Activated CD8-positive, alpha-beta T cell treated with anti-CD3 and anti-CD28 coated beads for 36 hours (primary cell): ENCODE measurements at regions of chr3 and their contacts with region 1.

Region 1: DNA sequence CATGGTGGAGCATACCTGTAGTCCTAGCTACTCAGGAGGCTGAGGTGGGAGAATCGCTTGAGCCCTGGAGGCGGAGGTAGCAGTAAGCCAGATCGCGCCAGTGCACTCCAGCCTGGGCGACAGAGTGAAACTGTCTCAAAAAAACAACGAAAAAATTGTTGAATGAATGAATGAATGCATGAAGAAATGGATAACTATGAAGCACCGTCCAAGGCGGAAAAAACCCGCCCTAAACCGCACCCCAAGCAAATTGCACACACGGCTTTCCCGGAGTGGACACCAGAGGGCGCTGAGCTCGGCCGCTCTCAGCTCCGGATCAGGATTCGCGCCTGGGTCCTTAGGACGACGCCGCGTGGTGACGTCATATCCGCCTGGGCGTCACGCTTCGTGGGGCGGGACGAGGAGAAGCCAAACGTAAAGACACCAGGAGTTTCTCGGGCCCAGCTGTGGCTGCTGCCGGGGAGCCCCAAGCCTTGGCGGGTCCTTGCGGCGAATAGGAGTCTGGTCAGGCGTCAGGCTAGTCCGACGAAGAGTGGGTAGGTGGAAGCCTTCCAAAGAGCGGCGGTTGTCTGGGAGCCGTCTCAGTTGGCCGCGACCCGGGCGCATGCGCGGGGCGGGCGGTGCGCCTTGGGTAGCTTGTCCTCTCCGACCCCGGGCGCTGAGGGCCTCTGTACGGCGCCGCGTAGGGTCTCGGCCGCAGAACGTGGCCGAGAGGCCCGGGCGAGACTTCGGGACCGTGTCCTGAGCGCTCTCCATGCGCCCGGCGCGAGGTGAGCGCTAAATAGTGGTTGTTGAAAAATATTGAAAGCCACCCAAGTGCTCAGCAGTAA is at the starts of genes HTD2 and RPP14:
- DNase-seq: peak; percentile 99
- ATAC-seq: peak; percentile 91
- H3K4me3 Mint-ChIP-seq: peak within 1 kb of the TSS; percentile 97
- H3K27ac Mint-ChIP-seq: peak within 1 kb of the TSS; percentile 100
- H3K4me1 Mint-ChIP-seq: peaks cover 23% of the 10 kb centered on the region
- H3K27me3 Mint-ChIP-seq: peaks cover 5% of the 10 kb centered on the region
- CTCF ChIP-seq: peak; percentile 81
- total RNA-seq, gene HTD2: 8.4 to 9.6 TPM
- total RNA-seq, gene RPP14: 16.1 to 18.0 TPM

Region 2: GRCh38 chr3:58167431-58168351 is 138.4 kb before region 1 on chr3:
- CTCF ChIA-PET with region 1: interaction called, 15 read pairs
- POLR2A ChIA-PET with region 1: no interaction called
- intact Hi-C with region 1: no loop called
- DNase-seq: peak; percentile 80
- ATAC-seq: peak; percentile 99
- H3K4me3 Mint-ChIP-seq: no peak overlapping the region
- H3K27ac Mint-ChIP-seq: no peak overlapping the region
- H3K4me1 Mint-ChIP-seq: peaks cover 3% of the 10 kb centered on the region
- H3K27me3 Mint-ChIP-seq: no peaks in the 10 kb centered on the region
- CTCF ChIP-seq: peak; percentile 92

Region 3: DNA sequence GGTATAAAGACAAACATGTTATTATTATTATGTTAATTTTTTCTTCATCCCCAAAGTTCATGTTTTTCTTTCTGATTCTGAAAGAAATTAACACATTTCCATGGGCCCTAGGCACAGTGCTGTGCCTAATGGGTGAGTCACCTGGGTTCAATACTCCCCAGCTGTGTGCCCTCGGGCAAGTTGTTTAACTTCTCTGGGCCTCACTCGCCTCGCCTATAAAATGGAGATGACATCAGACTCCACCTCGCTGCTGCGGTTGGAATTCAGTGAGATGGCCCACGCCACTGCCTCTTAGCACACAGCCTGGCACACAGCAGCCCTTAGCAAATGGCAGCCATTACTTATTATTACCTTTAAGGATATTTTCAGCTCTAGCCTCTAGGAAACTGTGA is 117.9 kb before region 1 on chr3:
- CTCF ChIA-PET with region 1: interaction called, 47 read pairs
- POLR2A ChIA-PET with region 1: interaction called, 3 read pairs
- intact Hi-C with region 1: loop called (anchors 5 kb)
- DNase-seq: no peak
- ATAC-seq: peak; percentile 55
- H3K4me3 Mint-ChIP-seq: no peak overlapping the region
- H3K27ac Mint-ChIP-seq: no peak overlapping the region
- H3K4me1 Mint-ChIP-seq: no peaks in the 10 kb centered on the region
- H3K27me3 Mint-ChIP-seq: no peaks in the 10 kb centered on the region
- CTCF ChIP-seq: no peak

Region 4: GRCh38 chr3:58237238-58237940 is 68.7 kb before region 1 on chr3 and contains the start of gene ABHD6:
- CTCF ChIA-PET with region 1: interaction called, 16 read pairs
- POLR2A ChIA-PET with region 1: interaction called, 5 read pairs
- intact Hi-C with region 1: loop called (anchors 5 kb)
- DNase-seq: peak; percentile 81
- ATAC-seq: peak; percentile 82
- H3K4me3 Mint-ChIP-seq: peak within 1 kb of the TSS; percentile 84
- H3K27ac Mint-ChIP-seq: peak within 1 kb of the TSS; percentile 84
- H3K4me1 Mint-ChIP-seq: peaks cover 5% of the 10 kb centered on the region
- H3K27me3 Mint-ChIP-seq: peaks cover 11% of the 10 kb centered on the region
- CTCF ChIP-seq: no peak
- total RNA-seq, gene ABHD6: 3.3 to 3.7 TPM

Region 5: DNA sequence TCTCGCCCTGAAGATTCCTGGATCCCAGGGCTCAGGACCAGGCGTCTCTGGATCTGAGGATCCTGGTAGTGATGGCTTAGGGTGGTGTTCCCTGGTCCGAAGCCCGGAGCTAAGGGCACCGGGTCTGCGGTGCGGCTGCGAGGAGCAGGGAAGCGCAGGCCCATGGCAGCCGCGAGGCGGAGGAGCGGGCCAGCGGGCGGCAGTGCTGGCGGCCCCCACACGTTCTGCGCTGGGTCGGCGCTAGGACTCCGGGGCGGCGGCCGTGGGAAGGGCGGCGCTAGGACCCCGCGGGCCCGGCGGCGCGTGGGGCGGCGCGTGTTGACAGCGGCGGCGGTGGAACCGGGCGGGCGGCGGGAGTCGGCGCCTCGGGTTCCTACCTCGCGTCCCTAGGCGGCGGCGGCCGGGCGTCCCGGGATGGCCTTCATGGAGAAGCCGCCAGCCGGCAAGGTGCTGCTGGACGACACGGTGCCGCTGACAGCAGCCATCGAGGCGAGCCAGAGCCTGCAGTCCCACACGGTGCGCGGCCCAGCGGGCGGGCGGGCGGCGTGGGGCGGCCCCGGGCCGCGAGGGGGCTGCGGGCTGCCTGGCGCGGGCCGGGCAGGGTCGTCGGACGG is 26.6 kb after region 1 on chr3 and contains the start of gene PXK:
- CTCF ChIA-PET with region 1: interaction called, 44 read pairs
- POLR2A ChIA-PET with region 1: interaction called, 16 read pairs
- intact Hi-C with region 1: no loop called
- DNase-seq: peak; percentile 81
- ATAC-seq: peak; percentile 89
- H3K4me3 Mint-ChIP-seq: peak within 1 kb of the TSS; percentile 92
- H3K27ac Mint-ChIP-seq: peak within 1 kb of the TSS; percentile 91
- H3K4me1 Mint-ChIP-seq: peaks cover 28% of the 10 kb centered on the region
- H3K27me3 Mint-ChIP-seq: no peaks in the 10 kb centered on the region
- CTCF ChIP-seq: no peak
- total RNA-seq, gene PXK: 22.2 to 23.6 TPM

Region 6: DNA sequence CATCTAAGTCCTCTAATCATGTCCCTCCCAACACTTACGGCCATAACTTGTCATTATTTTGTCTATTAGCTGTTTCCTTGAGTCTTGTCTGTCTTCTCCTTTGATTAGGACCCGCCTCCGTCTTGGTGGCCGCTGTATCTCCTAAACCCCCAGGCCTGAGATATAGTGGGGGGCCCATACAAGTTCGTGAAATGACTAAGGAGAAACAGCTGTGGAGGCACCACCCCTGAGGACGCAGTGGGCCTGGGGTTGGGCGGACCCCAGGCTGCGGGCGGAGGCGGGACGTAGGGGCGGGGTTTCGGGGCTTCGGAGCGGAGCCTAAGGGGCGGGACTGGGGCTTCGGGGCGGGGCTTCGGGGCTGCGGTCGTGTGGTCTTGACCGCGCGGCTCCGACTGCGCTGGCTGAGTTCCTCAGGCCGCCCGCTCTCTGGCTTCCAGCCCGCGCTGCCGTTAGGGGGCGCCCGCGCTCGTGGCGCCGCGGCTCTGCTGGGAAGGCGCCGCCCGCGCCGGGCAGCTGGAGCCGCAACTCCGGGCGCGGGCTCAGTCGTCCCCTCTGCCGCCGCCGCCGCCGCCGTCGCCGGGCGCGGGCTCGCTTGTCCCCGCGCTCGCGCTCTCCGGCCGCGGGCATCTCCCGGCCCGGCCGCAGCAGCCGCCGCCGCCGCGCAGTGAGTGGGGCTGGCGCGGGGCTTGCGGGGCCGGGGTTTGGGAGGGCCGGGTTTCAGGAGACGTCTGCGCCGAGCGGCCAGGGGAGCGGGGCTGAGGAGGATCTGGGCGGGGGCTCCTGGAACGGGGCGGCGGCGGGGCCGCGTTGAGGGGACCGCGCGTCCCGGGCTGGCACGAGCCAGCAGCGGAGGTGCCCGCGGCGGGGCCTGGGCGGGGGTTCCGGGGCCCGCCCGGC is 185.7 kb after region 1 on chr3 and contains the start of gene KCTD6:
- CTCF ChIA-PET with region 1: interaction called, 10 read pairs
- POLR2A ChIA-PET with region 1: interaction called, 6 read pairs
- intact Hi-C with region 1: no loop called
- DNase-seq: peak; percentile 85
- ATAC-seq: peak; percentile 90
- H3K4me3 Mint-ChIP-seq: peak within 1 kb of the TSS; percentile 81
- H3K27ac Mint-ChIP-seq: peak within 1 kb of the TSS; percentile 89
- H3K4me1 Mint-ChIP-seq: peaks cover 35% of the 10 kb centered on the region
- H3K27me3 Mint-ChIP-seq: peaks cover 2% of the 10 kb centered on the region
- CTCF ChIP-seq: peak; percentile 57
- total RNA-seq, gene KCTD6: 5.6 to 5.8 TPM

Region 7: DNA sequence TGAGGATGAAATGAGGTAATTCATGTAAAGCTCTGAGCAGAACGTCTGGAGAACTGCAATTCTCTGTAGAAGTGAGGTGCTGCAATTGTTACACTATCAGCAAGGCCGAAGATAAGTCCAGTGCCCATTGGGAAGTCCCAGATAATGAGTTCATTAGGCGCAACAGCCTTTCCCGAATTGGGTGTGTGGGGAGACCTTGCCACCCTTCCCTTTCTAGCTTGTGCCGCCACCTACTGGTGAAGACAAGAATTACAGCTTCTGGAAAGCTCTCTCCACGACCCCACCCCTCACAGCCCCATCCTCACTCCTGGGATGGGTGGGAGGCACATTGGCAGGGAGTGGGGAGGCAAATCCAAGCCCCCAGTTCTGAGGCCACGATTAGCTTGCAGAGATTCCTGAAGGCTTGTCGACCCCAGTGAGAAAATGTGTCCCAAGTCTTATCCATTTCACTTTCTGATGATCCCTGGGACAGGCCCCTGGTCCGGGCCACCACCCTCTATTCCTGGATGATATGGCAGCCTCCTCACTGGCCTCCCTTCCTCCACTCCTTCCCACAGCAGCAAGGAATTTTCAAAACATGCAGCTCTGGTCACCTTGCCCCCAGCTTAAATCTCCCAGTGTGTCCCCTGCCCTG is 324.1 kb after region 1 on chr3:
- CTCF ChIA-PET with region 1: interaction called, 13 read pairs
- POLR2A ChIA-PET with region 1: no interaction called
- intact Hi-C with region 1: no loop called
- DNase-seq: peak; percentile 66
- ATAC-seq: peak; percentile 51
- H3K4me3 Mint-ChIP-seq: no peak overlapping the region
- H3K27ac Mint-ChIP-seq: no peak overlapping the region
- H3K4me1 Mint-ChIP-seq: no peaks in the 10 kb centered on the region
- H3K27me3 Mint-ChIP-seq: peaks cover 4% of the 10 kb centered on the region
- CTCF ChIP-seq: peak; percentile 93